ENCODE measurements at regions of chr3 and their contacts with region 1.

Region 1: DNA sequence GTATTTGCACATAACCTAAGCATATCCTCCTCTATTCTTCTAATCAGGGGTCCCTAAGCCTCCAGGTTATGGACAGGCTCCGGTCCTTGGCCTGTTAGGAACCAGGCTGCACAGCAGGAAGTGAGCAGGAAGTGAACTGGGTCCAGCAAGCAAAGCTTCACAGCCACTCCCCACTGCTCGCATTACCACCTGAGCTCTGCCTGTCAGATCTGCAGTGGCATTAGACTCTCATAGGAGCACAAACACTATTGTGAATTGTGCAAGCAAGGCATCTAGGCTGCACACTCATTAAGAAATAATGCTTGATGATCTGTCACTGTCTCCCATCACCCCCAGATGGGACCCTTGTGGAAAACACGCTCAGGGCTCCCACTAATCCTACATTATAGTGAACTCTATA is 9.8 kb downstream of the MSL2 start:
- DNase-seq: peak; percentile 50
- H3K4me3 Mint-ChIP-seq: no peak overlapping the region
- H3K27ac Mint-ChIP-seq: no peak overlapping the region
- H3K4me1 Mint-ChIP-seq: peaks cover 91% of the 10 kb centered on the region
- H3K27me3 Mint-ChIP-seq: no peaks in the 10 kb centered on the region

Region 2: DNA sequence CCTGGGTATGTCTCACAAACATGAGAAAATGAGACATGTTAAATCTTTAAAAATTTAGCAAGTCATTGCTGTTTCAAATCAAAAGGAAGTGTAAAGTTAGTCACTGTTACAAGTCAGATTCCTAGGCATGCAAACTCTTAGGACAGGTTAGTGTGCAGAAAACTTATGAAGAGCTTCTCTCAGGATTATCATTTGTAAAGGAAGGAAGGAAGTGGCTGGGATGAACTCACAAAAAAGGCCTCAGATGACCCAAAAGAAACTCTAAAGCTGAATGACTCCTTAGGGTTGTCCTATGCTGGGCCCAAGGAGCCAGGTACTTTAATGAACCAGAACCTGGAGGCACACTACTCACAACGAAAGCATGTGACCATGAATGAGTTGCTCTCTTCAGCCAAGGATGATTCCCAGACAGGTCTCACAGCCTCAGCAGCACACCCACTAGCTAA is 15.2 kb before region 1 on chr3:
- CTCF ChIA-PET with region 1: interaction called, 6 read pairs
- intact Hi-C with region 1: loop called (anchors 1 kb)
- DNase-seq: peak; percentile 46
- H3K4me3 Mint-ChIP-seq: peak overlapping the region; percentile 2
- H3K27ac Mint-ChIP-seq: peak overlapping the region; percentile 70
- H3K4me1 Mint-ChIP-seq: peaks cover 43% of the 10 kb centered on the region
- H3K27me3 Mint-ChIP-seq: no peaks in the 10 kb centered on the region

Measured in activated naive CD4-positive, alpha-beta T cell treated with anti-CD3 and anti-CD28 coated beads for 36 hours (primary cell).